ENCODE measurements at regions of chr18 and their contacts with region 1.

Region 1: GRCh38 chr18:3623769-3624545 is 174.0 kb downstream of the TGIF1 start:
- DNase-seq: peak; percentile 61
- H3K4me3 ChIP-seq: no peak overlapping the region
- H3K27ac ChIP-seq: peak overlapping the region; percentile 70 to 80
- H3K4me1 ChIP-seq: peaks cover 5% of the 10 kb centered on the region
- H3K27me3 ChIP-seq: no peaks in the 10 kb centered on the region
- CTCF ChIP-seq: peak in 1 of 4 experiments; percentile 6
- POLR2A ChIP-seq: peak; percentile 31

Region 2: GRCh38 chr18:3458952-3459853 is 164.8 kb before region 1 on chr18:
- intact Hi-C with region 1: no loop called
- DNase-seq: no peak
- H3K4me3 ChIP-seq: no peak overlapping the region
- H3K27ac ChIP-seq: peak overlapping the region; percentile 50 to 59
- H3K4me1 ChIP-seq: peaks cover 28% of the 10 kb centered on the region
- H3K27me3 ChIP-seq: no peaks in the 10 kb centered on the region
- CTCF ChIP-seq: peak in 1 of 4 experiments; percentile 11
- POLR2A ChIP-seq: no peak

Region 3: GRCh38 chr18:3611313-3612090 is 12.5 kb before region 1 on chr18:
- intact Hi-C with region 1: loop called (anchors 1 kb)
- DNase-seq: no peak
- H3K4me3 ChIP-seq: no peak overlapping the region
- H3K27ac ChIP-seq: no peak overlapping the region
- H3K4me1 ChIP-seq: no peaks in the 10 kb centered on the region
- H3K27me3 ChIP-seq: no peaks in the 10 kb centered on the region
- CTCF ChIP-seq: no peak
- POLR2A ChIP-seq: no peak

Region 4: GRCh38 chr18:3665780-3666525 is 42.0 kb after region 1 on chr18:
- intact Hi-C with region 1: loop called (anchors 5 kb)
- DNase-seq: peak; percentile 85
- H3K4me3 ChIP-seq: no peak overlapping the region
- H3K27ac ChIP-seq: peak overlapping the region; percentile 57 to 62
- H3K4me1 ChIP-seq: no peaks in the 10 kb centered on the region
- H3K27me3 ChIP-seq: no peaks in the 10 kb centered on the region
- CTCF ChIP-seq: peak; percentile 76 to 96 (median 95)
- POLR2A ChIP-seq: no peak

Region 5: GRCh38 chr18:3885209-3885792 is 261.3 kb after region 1 on chr18:
- intact Hi-C with region 1: no loop called
- DNase-seq: no peak
- H3K4me3 ChIP-seq: no peak overlapping the region
- H3K27ac ChIP-seq: no peak overlapping the region
- H3K4me1 ChIP-seq: no peaks in the 10 kb centered on the region
- H3K27me3 ChIP-seq: no peaks in the 10 kb centered on the region
- CTCF ChIP-seq: peak in 1 of 4 experiments; percentile 36
- POLR2A ChIP-seq: no peak

Region 6: GRCh38 chr18:4181882-4182568 is 558.1 kb after region 1 on chr18:
- intact Hi-C with region 1: no loop called
- DNase-seq: no peak
- H3K4me3 ChIP-seq: no peak overlapping the region
- H3K27ac ChIP-seq: no peak overlapping the region
- H3K4me1 ChIP-seq: no peaks in the 10 kb centered on the region
- H3K27me3 ChIP-seq: no peaks in the 10 kb centered on the region
- CTCF ChIP-seq: no peak
- POLR2A ChIP-seq: no peak